CD4-positive, alpha-beta memory T cell (primary cell): ENCODE measurements at regions of chr14 and their contacts with region 1.

Region 1: GRCh38 chr14:81533536-81534343 is at the start of gene SEL1L:
- DNase-seq: peak; percentile 99 to 100 (median 99)
- H3K4me3 ChIP-seq: peak within 1 kb of the TSS; percentile 84 to 91
- H3K4me3 Mint-ChIP-seq: peak within 1 kb of the TSS; percentile 94 to 97 (median 96)
- H3K27ac ChIP-seq: peak within 1 kb of the TSS; percentile 86
- H3K27ac Mint-ChIP-seq: peak within 1 kb of the TSS; percentile 88 to 97 (median 94)
- H3K4me1 ChIP-seq: peaks cover 53% of the 10 kb centered on the region
- H3K4me1 Mint-ChIP-seq: peaks cover 33 to 69% (median 52%) of the 10 kb centered on the region in 4 donors
- H3K27me3 ChIP-seq: no peaks in the 10 kb centered on the region
- H3K27me3 Mint-ChIP-seq: peaks cover 0 to 2% of the 10 kb centered on the region in 2 donors
- total RNA-seq, gene SEL1L: 65.7 TPM

Region 2: GRCh38 chr14:80941241-80942182 is 592.2 kb before region 1 on chr14 and contains the start of gene CEP128:
- CTCF ChIA-PET with region 1: no interaction called
- POLR2A ChIA-PET with region 1: no interaction called
- intact Hi-C with region 1: loop called (anchors 5 kb)
- DNase-seq: peak; percentile 77 to 84 (median 82)
- H3K4me3 ChIP-seq: peak within 1 kb of the TSS; percentile 64 to 75
- H3K4me3 Mint-ChIP-seq: peak within 1 kb of the TSS; percentile 89 to 95 (median 92)
- H3K27ac ChIP-seq: peak within 1 kb of the TSS; percentile 80
- H3K27ac Mint-ChIP-seq: peak within 1 kb of the TSS; percentile 82 to 96 (median 93)
- H3K4me1 ChIP-seq: peaks cover 30% of the 10 kb centered on the region
- H3K4me1 Mint-ChIP-seq: peaks cover 19 to 34% (median 25%) of the 10 kb centered on the region in 4 donors
- H3K27me3 ChIP-seq: no peaks in the 10 kb centered on the region
- H3K27me3 Mint-ChIP-seq: no peaks in the 10 kb centered on the region
- total RNA-seq, gene CEP128: 20.1 to 21.6 TPM

Region 3: GRCh38 chr14:81427348-81428058 is 106.2 kb before region 1 on chr14:
- CTCF ChIA-PET with region 1: no interaction called
- POLR2A ChIA-PET with region 1: no interaction called
- intact Hi-C with region 1: no loop called
- DNase-seq: no peak
- H3K4me3 ChIP-seq: no peak overlapping the region
- H3K4me3 Mint-ChIP-seq: no peak overlapping the region
- H3K27ac ChIP-seq: no peak overlapping the region
- H3K27ac Mint-ChIP-seq: no peak overlapping the region
- H3K4me1 ChIP-seq: no peaks in the 10 kb centered on the region
- H3K4me1 Mint-ChIP-seq: no peaks in the 10 kb centered on the region
- H3K27me3 ChIP-seq: no peaks in the 10 kb centered on the region
- H3K27me3 Mint-ChIP-seq: peaks cover 25 to 32% of the 10 kb centered on the region in 2 donors

Region 4: GRCh38 chr14:81474148-81474492 is 59.6 kb before region 1 on chr14:
- CTCF ChIA-PET with region 1: no interaction called
- POLR2A ChIA-PET with region 1: no interaction called
- intact Hi-C with region 1: loop called (anchors 5 kb)
- DNase-seq: peak in 4 of 5 donors; percentile 16 to 29 (median 19)
- H3K4me3 ChIP-seq: peak overlapping the region; percentile 2 to 39
- H3K4me3 Mint-ChIP-seq: peak overlapping the region; percentile 79 to 88 (median 83)
- H3K27ac ChIP-seq: peak overlapping the region; percentile 56
- H3K27ac Mint-ChIP-seq: peak overlapping the region; percentile 74 to 97 (median 94)
- H3K4me1 ChIP-seq: peaks cover 16% of the 10 kb centered on the region
- H3K4me1 Mint-ChIP-seq: peaks cover 21 to 33% (median 27%) of the 10 kb centered on the region in 4 donors
- H3K27me3 ChIP-seq: no peaks in the 10 kb centered on the region
- H3K27me3 Mint-ChIP-seq: no peaks in the 10 kb centered on the region

Region 5: GRCh38 chr14:81519200-81520011 is 14.3 kb before region 1 on chr14:
- CTCF ChIA-PET with region 1: interaction called, 5 read pairs
- POLR2A ChIA-PET with region 1: interaction called, 10 read pairs
- intact Hi-C with region 1: no loop called
- DNase-seq: peak in 3 of 5 donors; percentile 8 to 14 (median 14)
- H3K4me3 ChIP-seq: no peak overlapping the region
- H3K4me3 Mint-ChIP-seq: peak overlapping the region in 7 of 8 donors; percentile 37 to 69 (median 52)
- H3K27ac ChIP-seq: peak overlapping the region; percentile 19
- H3K27ac Mint-ChIP-seq: peak overlapping the region; percentile 66 to 89 (median 77)
- H3K4me1 ChIP-seq: peaks cover 25% of the 10 kb centered on the region
- H3K4me1 Mint-ChIP-seq: peaks cover 28 to 54% (median 40%) of the 10 kb centered on the region in 4 donors
- H3K27me3 ChIP-seq: no peaks in the 10 kb centered on the region
- H3K27me3 Mint-ChIP-seq: no peaks in the 10 kb centered on the region